ENCODE measurements at regions of chr1 and their contacts with region 1.

Region 1: GRCh38 chr1:223712194-223712849 is at the start of gene CAPN2:
- DNase-seq: peak; percentile 93
- H3K4me3 ChIP-seq: peak within 1 kb of the TSS; percentile 59 to 86 (median 73)
- H3K27ac ChIP-seq: peak within 1 kb of the TSS; percentile 91 to 95 (median 92)
- H3K4me1 ChIP-seq: peaks cover 0 to 54% (median 45%) of the 10 kb centered on the region in 4 donors
- H3K27me3 ChIP-seq: no peaks in the 10 kb centered on the region
- CTCF ChIP-seq: peak; percentile 46 to 78 (median 55)
- EP300 ChIP-seq: no peak
- POLR2A ChIP-seq: no peak
- total RNA-seq, gene CAPN2: 67.3 to 154 (median 73.6) TPM

Region 2: GRCh38 chr1:223748773-223749733 is 36.7 kb after region 1 on chr1:
- intact Hi-C with region 1: loop called (anchors 1 kb)
- DNase-seq: peak; percentile 82
- H3K4me3 ChIP-seq: peak overlapping the region; percentile 30 to 58 (median 48)
- H3K27ac ChIP-seq: peak overlapping the region; percentile 70 to 83 (median 76)
- H3K4me1 ChIP-seq: peaks cover 0 to 15% (median 12%) of the 10 kb centered on the region in 4 donors
- H3K27me3 ChIP-seq: no peaks in the 10 kb centered on the region
- CTCF ChIP-seq: peak; percentile 74 to 98 (median 90)
- EP300 ChIP-seq: no peak
- POLR2A ChIP-seq: no peak

Region 3: GRCh38 chr1:223845810-223846682 is 133.7 kb after region 1 on chr1 and contains the start of gene TP53BP2:
- intact Hi-C with region 1: loop called (anchors 2 kb)
- DNase-seq: peak; percentile 93
- H3K4me3 ChIP-seq: peak within 1 kb of the TSS; percentile 71 to 96 (median 85)
- H3K27ac ChIP-seq: peak within 1 kb of the TSS; percentile 98 to 99 (median 98)
- H3K4me1 ChIP-seq: peaks cover 0 to 39% (median 27%) of the 10 kb centered on the region in 4 donors
- H3K27me3 ChIP-seq: no peaks in the 10 kb centered on the region
- CTCF ChIP-seq: peak; percentile 32 to 69 (median 56)
- EP300 ChIP-seq: no peak
- POLR2A ChIP-seq: peak; percentile 68 to 70
- total RNA-seq, gene TP53BP2: 24.6 to 28.5 (median 26.9) TPM